ENCODE measurements at regions of chr3 and their contacts with region 1.

Region 1: GRCh38 chr3:119463171-119464169 is at the start of gene TMEM39A:
- DNase-seq: peak; percentile 92 to 99
- H3K4me3 ChIP-seq: peak within 1 kb of the TSS; percentile 87
- H3K27ac ChIP-seq: peak within 1 kb of the TSS; percentile 56
- H3K4me1 ChIP-seq: peaks cover 17% of the 10 kb centered on the region
- H3K27me3 ChIP-seq: no peaks in the 10 kb centered on the region
- CTCF ChIP-seq: peak; percentile 40; the same call in 1 of the 2 replicates
- total RNA-seq, gene TMEM39A: 46.8 and 51.7 TPM in 2 replicates

Region 2: GRCh38 chr3:119223511-119223910 is 240.0 kb before region 1 on chr3:
- CTCF ChIA-PET with region 1: no interaction called
- POLR2A ChIA-PET with region 1: no interaction called
- intact Hi-C with region 1: no loop called
- DNase-seq: no peak
- H3K4me3 ChIP-seq: no peak overlapping the region
- H3K27ac ChIP-seq: no peak overlapping the region
- H3K4me1 ChIP-seq: no peaks in the 10 kb centered on the region
- H3K27me3 ChIP-seq: no peaks in the 10 kb centered on the region
- CTCF ChIP-seq: no peak

Region 3: DNA sequence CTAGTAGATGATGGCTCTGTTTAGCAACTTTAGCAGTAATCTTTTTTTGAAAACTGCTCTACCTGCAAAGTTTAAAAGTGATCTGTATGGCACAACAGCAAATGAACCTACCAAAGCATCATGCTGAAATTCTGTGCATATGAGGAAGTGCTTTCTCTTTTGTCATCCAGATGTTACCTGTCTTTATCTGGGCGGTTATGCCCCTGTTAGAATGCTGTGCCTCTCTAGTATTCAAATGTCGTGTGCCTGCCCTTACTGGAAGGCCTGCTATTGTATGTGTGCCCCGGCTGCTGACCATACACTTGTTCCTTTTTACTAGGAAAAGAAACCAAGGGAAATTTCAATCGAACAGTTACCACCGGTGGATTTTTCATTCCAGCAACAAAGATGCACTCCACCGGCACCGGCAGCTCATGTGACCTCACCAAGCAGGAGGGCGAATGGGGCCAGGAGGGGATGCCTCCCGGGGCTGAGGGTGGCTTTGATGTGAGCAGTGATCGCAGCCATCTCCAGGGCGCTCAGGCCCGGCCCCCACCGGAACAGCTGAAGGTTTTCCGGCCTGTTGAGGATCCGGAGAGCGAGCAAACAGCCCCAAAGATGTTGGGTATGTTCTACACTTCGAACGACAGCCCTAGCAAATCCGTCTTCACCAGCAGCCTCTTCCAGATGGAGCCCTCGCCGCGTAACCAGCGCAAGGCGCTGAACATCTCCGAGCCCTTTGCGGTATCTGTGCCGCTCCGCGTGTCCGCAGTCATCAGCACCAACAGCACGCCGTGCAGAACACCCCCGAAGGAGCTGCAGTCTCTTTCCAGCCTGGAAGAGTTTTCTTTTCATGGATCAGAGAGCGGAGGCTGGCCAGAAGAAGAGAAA is 61.7 kb before region 1 on chr3:
- CTCF ChIA-PET with region 1: no interaction called
- POLR2A ChIA-PET with region 1: no interaction called
- intact Hi-C with region 1: no loop called
- DNase-seq: no peak
- H3K4me3 ChIP-seq: no peak overlapping the region
- H3K27ac ChIP-seq: no peak overlapping the region
- H3K4me1 ChIP-seq: no peaks in the 10 kb centered on the region
- H3K27me3 ChIP-seq: no peaks in the 10 kb centered on the region
- CTCF ChIP-seq: no peak

Region 4: DNA sequence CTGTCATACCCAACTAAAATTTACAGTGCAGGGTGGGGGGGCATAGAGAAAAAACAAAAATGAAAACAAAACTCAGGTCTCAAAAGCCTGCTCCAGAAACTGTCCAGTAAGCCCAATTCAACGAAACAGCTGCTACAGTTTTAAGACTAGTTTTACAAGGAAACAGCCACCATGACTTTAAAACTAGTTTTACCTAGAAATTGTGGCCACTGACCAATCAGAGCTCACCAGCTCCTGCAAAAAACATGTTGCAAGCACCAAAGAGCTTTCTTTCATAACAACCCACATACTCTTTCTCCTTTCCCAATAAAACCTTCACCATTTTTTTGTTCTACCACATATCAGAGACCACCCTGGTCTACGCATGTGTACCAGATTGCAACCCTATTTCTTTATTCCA is 232.0 kb after region 1 on chr3:
- CTCF ChIA-PET with region 1: no interaction called
- POLR2A ChIA-PET with region 1: interaction called, 12 read pairs
- intact Hi-C with region 1: no loop called
- DNase-seq: no peak
- H3K4me3 ChIP-seq: peak overlapping the region; percentile 24; the same call in 1 of the 2 replicates
- H3K27ac ChIP-seq: no peak overlapping the region
- H3K4me1 ChIP-seq: no peaks in the 10 kb centered on the region
- H3K27me3 ChIP-seq: no peaks in the 10 kb centered on the region
- CTCF ChIP-seq: no peak